ENCODE measurements at regions of chr1 and their contacts with region 1.

Region 1: DNA sequence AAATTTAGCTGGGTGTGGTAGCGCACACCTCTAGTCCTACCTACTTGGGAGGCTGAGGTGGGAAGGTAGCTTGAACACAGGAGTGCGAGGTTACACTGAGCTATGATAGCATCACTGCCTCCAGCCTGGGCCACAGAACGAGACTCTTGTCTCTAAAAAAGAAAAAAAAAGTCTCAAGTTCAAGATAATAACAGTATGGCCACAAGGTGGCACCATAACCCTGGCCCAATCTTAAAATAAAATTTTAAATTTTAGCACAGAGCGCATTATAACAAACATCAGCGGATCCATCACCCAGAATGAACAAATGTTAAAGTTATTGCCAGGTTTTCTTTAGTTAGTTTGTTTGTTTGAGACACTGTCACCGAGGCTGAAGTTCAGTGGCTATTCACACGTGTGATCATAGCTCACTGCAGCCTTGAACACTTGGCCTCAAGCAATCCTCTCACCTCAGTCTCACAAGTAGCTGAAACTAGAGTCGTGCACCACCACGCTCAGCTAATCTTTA is 2.9 kb upstream of the HTR6 start:
- DNase-seq: no peak
- H3K4me3 ChIP-seq: no peak overlapping the region
- H3K27ac ChIP-seq: no peak overlapping the region
- H3K4me1 ChIP-seq: no peaks in the 10 kb centered on the region
- H3K27me3 ChIP-seq: peaks cover 12% of the 10 kb centered on the region
- CTCF ChIP-seq: peak; percentile 58 to 87 (median 64)
- POLR2A ChIP-seq: no peak

Region 2: DNA sequence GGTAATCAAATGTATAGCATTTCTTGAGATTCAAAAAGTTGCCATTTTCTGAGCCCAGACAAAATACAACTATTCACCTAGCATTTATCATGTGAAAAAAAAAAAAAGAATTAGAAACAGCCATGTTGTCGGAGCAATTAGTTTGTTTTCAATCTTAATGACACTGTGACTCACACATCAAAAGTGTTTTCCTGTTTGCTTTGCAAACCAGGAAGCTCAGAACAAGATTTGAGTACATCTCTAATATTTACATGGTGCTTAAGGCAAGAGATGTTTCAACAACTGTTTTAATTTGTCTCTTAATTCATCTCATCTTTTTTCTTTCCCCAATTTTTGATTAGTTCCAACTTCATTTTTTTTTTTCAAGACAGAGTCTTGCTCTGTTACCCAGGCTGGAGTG is 114.0 kb before region 1 on chr1:
- intact Hi-C with region 1: no loop called
- DNase-seq: no peak
- H3K4me3 ChIP-seq: no peak overlapping the region
- H3K27ac ChIP-seq: no peak overlapping the region
- H3K4me1 ChIP-seq: no peaks in the 10 kb centered on the region
- H3K27me3 ChIP-seq: no peaks in the 10 kb centered on the region
- CTCF ChIP-seq: no peak
- POLR2A ChIP-seq: no peak

Region 3: GRCh38 chr1:19704247-19705113 is 42.7 kb after region 1 on chr1:
- intact Hi-C with region 1: loop called (anchors 5 kb)
- DNase-seq: peak; percentile 71
- H3K4me3 ChIP-seq: no peak overlapping the region
- H3K27ac ChIP-seq: peak overlapping the region; percentile 73 to 81
- H3K4me1 ChIP-seq: peaks cover 6% of the 10 kb centered on the region
- H3K27me3 ChIP-seq: no peaks in the 10 kb centered on the region
- CTCF ChIP-seq: peak; percentile 73 to 94 (median 85)
- POLR2A ChIP-seq: no peak